Aorta (tissue), 5 donors: ENCODE measurements at regions of chr5 and their contacts with region 1.

Region 1: DNA sequence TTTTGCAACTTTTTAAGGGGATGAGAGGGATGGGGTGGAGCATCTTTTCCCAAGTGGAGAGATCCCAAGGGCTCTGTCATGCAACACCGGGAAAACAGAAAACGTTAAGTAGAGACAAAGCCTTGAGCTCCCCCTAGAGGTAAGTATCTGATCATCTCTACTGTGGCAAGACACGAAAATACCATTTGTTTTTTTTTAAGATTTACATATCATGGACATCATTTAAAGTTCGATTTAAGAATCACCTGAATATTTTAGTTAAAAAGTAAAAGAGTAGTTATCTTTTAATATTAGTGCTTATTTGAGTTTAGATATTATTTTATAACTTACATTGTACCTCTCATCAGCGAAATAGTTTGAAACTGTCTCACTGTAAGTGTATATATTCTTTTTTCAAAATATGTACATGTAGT is 200.4 kb downstream of the LRRC70 start:
- DNase-seq: no peak
- ATAC-seq: peak; percentile 83
- H3K4me3 ChIP-seq: no peak overlapping the region
- H3K27ac ChIP-seq: no peak overlapping the region
- H3K4me1 ChIP-seq: no peaks in the 10 kb centered on the region
- H3K27me3 ChIP-seq: no peaks in the 10 kb centered on the region

Region 2: GRCh38 chr5:62448528-62448927 is 330.5 kb before region 1 on chr5:
- intact Hi-C with region 1: loop called (anchors 5 to 10 kb)
- DNase-seq: no peak
- ATAC-seq: no peak
- H3K4me3 ChIP-seq: no peak overlapping the region
- H3K27ac ChIP-seq: no peak overlapping the region
- H3K4me1 ChIP-seq: no peaks in the 10 kb centered on the region
- H3K27me3 ChIP-seq: no peaks in the 10 kb centered on the region

Region 3: DNA sequence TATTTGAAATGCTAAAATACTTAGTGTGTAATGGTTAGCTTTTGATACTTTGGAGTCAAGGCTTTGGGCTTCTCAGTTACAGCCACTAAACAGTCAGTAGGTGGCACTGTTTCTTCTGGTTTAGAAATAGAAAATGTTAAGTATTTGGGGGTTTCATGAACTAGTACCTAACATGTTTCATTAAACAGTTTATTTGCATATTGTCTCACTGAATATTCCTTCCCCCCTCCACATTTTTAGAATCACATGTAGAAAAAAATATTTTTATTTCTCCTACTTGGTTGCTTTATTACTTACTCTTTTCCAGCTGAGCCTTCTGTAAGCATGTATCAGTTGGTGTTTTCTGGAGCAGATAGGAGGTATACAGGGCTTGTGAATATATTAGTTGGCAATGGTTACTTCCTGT is 318.4 kb before region 1 on chr5:
- intact Hi-C with region 1: loop called (anchors 5 to 10 kb)
- DNase-seq: no peak
- ATAC-seq: no peak
- H3K4me3 ChIP-seq: no peak overlapping the region
- H3K27ac ChIP-seq: no peak overlapping the region
- H3K4me1 ChIP-seq: no peaks in the 10 kb centered on the region
- H3K27me3 ChIP-seq: no peaks in the 10 kb centered on the region